ENCODE measurements at regions of chr2 and their contacts with region 1.

Region 1: GRCh38 chr2:210997373-210997772 is 441.0 kb downstream of the CPS1 start:
- DNase-seq: no peak
- H3K4me3 ChIP-seq: no peak overlapping the region
- H3K27ac ChIP-seq: no peak overlapping the region
- H3K4me1 ChIP-seq: peaks cover 0 to 3% of the 10 kb centered on the region in 2 donors
- H3K27me3 ChIP-seq: no peaks in the 10 kb centered on the region
- CTCF ChIP-seq: no peak

Region 2: GRCh38 chr2:210309548-210310233 is 687.7 kb before region 1 on chr2:
- intact Hi-C with region 1: no loop called
- DNase-seq: no peak
- H3K4me3 ChIP-seq: no peak overlapping the region
- H3K27ac ChIP-seq: no peak overlapping the region
- H3K4me1 ChIP-seq: no peaks in the 10 kb centered on the region
- H3K27me3 ChIP-seq: no peaks in the 10 kb centered on the region
- CTCF ChIP-seq: no peak

Region 3: DNA sequence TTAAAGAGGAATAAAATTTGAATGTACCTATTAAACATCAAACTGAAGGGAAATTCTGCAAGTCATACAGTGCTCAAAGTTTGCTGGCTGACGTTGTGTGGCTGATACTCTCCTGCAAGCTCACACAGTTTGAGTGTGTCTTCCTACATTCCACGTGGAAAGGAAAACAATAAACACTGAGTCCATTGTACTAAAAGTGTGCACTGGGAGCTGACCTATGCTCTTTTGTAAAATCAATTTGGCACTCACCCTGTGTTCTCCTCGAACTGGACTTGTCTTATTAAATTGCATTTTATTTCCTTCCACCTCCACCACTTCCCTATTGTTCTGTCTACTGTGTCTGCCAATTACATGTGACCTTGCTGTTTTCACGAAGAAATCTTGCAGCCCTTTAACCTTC is 17.0 kb after region 1 on chr2:
- intact Hi-C with region 1: loop called (anchors 2 kb)
- DNase-seq: no peak
- H3K4me3 ChIP-seq: no peak overlapping the region
- H3K27ac ChIP-seq: no peak overlapping the region
- H3K4me1 ChIP-seq: no peaks in the 10 kb centered on the region
- H3K27me3 ChIP-seq: no peaks in the 10 kb centered on the region
- CTCF ChIP-seq: no peak